Activated naive CD4-positive, alpha-beta T cell treated with anti-CD3 and anti-CD28 coated beads for 36 hours (primary cell): ENCODE measurements at regions of chr16 and their contacts with region 1.

Region 1: GRCh38 chr16:2603165-2604015 is 65.6 kb downstream of the PDPK1 start:
- DNase-seq: peak; percentile 94
- H3K4me3 Mint-ChIP-seq: peak overlapping the region; percentile 95
- H3K27ac Mint-ChIP-seq: peak overlapping the region; percentile 88
- H3K4me1 Mint-ChIP-seq: peaks cover 26% of the 10 kb centered on the region
- H3K27me3 Mint-ChIP-seq: no peaks in the 10 kb centered on the region

Region 2: GRCh38 chr16:2009789-2010510 is 593.4 kb before region 1 on chr16 and contains the start of gene ZNF598:
- CTCF ChIA-PET with region 1: no interaction called
- intact Hi-C with region 1: no loop called
- DNase-seq: peak; percentile 77
- H3K4me3 Mint-ChIP-seq: peak within 1 kb of the TSS; percentile 88
- H3K27ac Mint-ChIP-seq: peak within 1 kb of the TSS; percentile 89
- H3K4me1 Mint-ChIP-seq: peaks cover 39% of the 10 kb centered on the region
- H3K27me3 Mint-ChIP-seq: no peaks in the 10 kb centered on the region
- total RNA-seq, gene ZNF598: 88.8 to 93.5 TPM

Region 3: DNA sequence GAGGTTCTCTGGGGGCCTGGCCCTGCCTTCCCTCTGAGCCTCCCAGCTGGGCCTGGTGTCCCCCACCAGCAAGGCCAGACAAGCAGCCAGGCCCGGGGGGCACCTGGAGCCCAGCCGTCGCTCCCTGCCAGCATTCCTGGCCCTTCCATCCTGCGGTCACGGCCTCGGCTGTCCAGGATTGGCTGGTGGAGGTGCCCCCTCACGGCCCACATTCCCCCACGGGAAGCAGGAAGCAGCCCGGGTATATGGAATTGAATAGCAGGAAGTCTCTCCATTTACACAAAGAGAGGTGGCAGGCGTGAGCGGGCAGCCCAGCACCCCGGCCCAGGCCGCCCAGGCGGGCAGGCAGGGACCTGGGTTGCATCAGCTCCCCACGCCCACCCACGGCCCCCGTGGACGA is 433.3 kb before region 1 on chr16:
- CTCF ChIA-PET with region 1: no interaction called
- intact Hi-C with region 1: no loop called
- DNase-seq: no peak
- H3K4me3 Mint-ChIP-seq: no peak overlapping the region
- H3K27ac Mint-ChIP-seq: no peak overlapping the region
- H3K4me1 Mint-ChIP-seq: no peaks in the 10 kb centered on the region
- H3K27me3 Mint-ChIP-seq: no peaks in the 10 kb centered on the region

Region 4: GRCh38 chr16:2531767-2532493 is 71.5 kb before region 1 on chr16:
- CTCF ChIA-PET with region 1: no interaction called
- intact Hi-C with region 1: loop called (anchors 10 kb)
- DNase-seq: peak; percentile 99
- H3K4me3 Mint-ChIP-seq: peak overlapping the region; percentile 92
- H3K27ac Mint-ChIP-seq: peak overlapping the region; percentile 97
- H3K4me1 Mint-ChIP-seq: peaks cover 16% of the 10 kb centered on the region
- H3K27me3 Mint-ChIP-seq: no peaks in the 10 kb centered on the region

Region 5: GRCh38 chr16:2663553-2664546 is 60.5 kb after region 1 on chr16:
- CTCF ChIA-PET with region 1: no interaction called
- intact Hi-C with region 1: loop called (anchors 10 kb)
- DNase-seq: peak; percentile 83
- H3K4me3 Mint-ChIP-seq: peak overlapping the region; percentile 36
- H3K27ac Mint-ChIP-seq: peak overlapping the region; percentile 97
- H3K4me1 Mint-ChIP-seq: peaks cover 42% of the 10 kb centered on the region
- H3K27me3 Mint-ChIP-seq: no peaks in the 10 kb centered on the region